ENCODE measurements at regions of chr12 and their contacts with region 1.

Region 1: GRCh38 chr12:12398026-12398859 is 41.4 kb downstream of the BORCS5 start:
- DNase-seq: peak; percentile 97
- H3K4me3 Mint-ChIP-seq: peak overlapping the region; percentile 34
- H3K27ac Mint-ChIP-seq: peak overlapping the region; percentile 21
- H3K4me1 Mint-ChIP-seq: peaks cover 18% of the 10 kb centered on the region
- H3K27me3 Mint-ChIP-seq: no peaks in the 10 kb centered on the region
- CTCF ChIP-seq: no peak

Region 2: DNA sequence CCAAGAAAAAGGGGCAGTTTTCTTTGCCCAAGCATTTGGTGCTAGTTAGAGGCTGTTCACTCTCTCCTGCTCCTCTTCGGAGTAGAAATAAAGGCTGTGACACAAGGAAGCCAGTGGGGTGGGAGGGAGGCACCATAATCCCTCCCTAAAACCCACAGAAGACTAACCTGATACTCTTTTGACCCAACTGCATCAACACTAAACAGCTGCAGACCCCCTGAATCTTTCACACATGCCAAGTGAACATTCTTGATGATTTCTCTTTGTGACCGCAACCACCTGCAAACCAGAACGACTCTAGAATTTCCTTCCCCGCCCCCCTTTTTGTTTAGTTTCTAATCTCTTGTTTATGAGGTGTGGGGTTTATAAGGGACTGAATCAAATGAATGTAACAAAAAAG is 503.4 kb before region 1 on chr12:
- CTCF ChIA-PET with region 1: no interaction called
- POLR2A ChIA-PET with region 1: no interaction called
- intact Hi-C with region 1: no loop called
- DNase-seq: no peak
- H3K4me3 Mint-ChIP-seq: no peak overlapping the region
- H3K27ac Mint-ChIP-seq: no peak overlapping the region
- H3K4me1 Mint-ChIP-seq: no peaks in the 10 kb centered on the region
- H3K27me3 Mint-ChIP-seq: no peaks in the 10 kb centered on the region
- CTCF ChIP-seq: no peak

Region 3: GRCh38 chr12:12349711-12350665 is 48.3 kb before region 1 on chr12 and contains the start of gene MANSC1:
- CTCF ChIA-PET with region 1: no interaction called
- POLR2A ChIA-PET with region 1: no interaction called
- intact Hi-C with region 1: no loop called
- DNase-seq: no peak
- H3K4me3 Mint-ChIP-seq: peak within 1 kb of the TSS; percentile 59
- H3K27ac Mint-ChIP-seq: no peak within 1 kb of the TSS
- H3K4me1 Mint-ChIP-seq: no peaks in the 10 kb centered on the region
- H3K27me3 Mint-ChIP-seq: no peaks in the 10 kb centered on the region
- CTCF ChIP-seq: peak; percentile 36
- total RNA-seq, gene MANSC1: 9.9 and 10.1 TPM in 2 replicates

Region 4: DNA sequence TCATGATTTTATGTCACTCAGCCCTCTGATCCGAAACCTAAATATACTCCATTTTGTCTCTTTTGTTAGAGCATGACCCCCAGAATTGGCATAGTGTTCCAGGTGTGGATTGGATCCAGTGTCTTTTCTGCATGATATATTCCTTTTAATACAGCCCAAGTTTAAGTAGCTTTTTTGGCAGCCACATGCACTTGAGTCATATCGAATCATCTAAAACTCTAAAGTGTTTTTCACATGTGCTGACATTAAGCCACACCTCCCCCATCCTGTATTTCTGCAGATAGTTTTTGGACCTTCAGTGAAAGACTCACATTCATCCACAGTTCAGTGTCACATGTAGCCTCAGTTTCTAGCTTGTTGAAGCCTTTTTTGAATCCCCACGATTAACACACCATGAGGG is 10.7 kb before region 1 on chr12:
- CTCF ChIA-PET with region 1: interaction called, 6 read pairs
- POLR2A ChIA-PET with region 1: interaction called, 33 read pairs
- intact Hi-C with region 1: no loop called
- DNase-seq: peak; percentile 59
- H3K4me3 Mint-ChIP-seq: peak overlapping the region; percentile 27
- H3K27ac Mint-ChIP-seq: peak overlapping the region; percentile 79
- H3K4me1 Mint-ChIP-seq: peaks cover 8% of the 10 kb centered on the region
- H3K27me3 Mint-ChIP-seq: no peaks in the 10 kb centered on the region
- CTCF ChIP-seq: no peak

Region 5: DNA sequence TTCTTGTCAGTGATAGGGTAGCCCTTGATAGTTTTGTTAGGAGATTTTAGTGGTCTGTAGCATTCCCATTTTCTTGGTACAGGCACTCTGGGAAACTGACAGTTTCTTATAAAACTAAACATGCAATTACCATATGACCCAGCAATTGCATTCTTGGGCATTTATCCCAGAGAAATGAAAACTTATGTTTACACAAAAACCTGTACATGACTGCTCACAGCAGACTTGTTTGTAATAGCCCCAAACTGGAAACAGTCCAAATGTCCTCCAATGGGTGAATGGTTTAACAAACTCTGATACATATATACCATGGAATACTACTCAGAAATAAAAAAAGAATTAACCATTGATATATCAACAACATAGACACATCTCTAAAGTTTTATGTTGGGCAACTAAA is 34.1 kb after region 1 on chr12:
- CTCF ChIA-PET with region 1: interaction called, 7 read pairs
- POLR2A ChIA-PET with region 1: interaction called, 26 read pairs
- intact Hi-C with region 1: loop called (anchors 5 kb)
- DNase-seq: peak; percentile 84
- H3K4me3 Mint-ChIP-seq: peak overlapping the region; percentile 41
- H3K27ac Mint-ChIP-seq: peak overlapping the region; percentile 84
- H3K4me1 Mint-ChIP-seq: peaks cover 39% of the 10 kb centered on the region
- H3K27me3 Mint-ChIP-seq: no peaks in the 10 kb centered on the region
- CTCF ChIP-seq: no peak